Motor neuron (in vitro differentiated cells): ENCODE measurements at regions of chr11 and their contacts with region 1.

Region 1: GRCh38 chr11:57644748-57645688 is 4.7 kb downstream of the YPEL4 start:
- ATAC-seq: peak; percentile 34 to 75 (median 48)
- H3K4me3 ChIP-seq: no peak overlapping the region
- H3K27ac ChIP-seq: no peak overlapping the region
- H3K4me1 ChIP-seq: peaks cover 55 to 66% of the 10 kb centered on the region in 2 donors

Region 2: DNA sequence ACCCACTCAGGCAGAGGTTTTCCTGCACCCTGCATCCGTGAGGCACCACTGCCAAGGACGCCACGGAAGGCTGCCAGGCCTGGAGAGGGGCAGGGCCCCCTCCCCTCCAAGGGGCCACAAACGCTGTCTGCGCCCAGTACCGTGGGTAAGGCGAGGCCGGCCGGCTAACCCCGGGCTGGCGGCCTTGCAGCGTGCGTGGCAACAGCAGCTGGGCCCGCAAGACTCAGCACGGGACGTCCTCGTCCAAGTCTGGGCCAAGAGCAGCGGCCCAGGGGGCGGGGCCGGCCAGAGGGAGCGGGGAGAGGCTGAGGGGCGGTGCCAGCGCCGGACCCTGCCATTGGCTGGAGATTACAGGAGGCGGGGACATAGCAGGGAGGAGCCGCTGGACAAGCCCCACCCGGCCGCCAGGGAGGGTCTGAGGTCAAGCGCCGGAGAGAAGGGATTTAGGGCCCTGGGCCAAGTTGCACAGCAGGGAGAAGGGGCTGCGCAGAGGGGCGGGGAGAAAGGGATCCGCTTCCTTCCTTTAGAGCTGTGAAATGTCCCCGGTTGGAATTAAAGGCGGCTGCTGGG is 145.5 kb before region 1 on chr11:
- in situ Hi-C with region 1: loop called in 1 of 9 experiments (anchors 25 kb)
- ATAC-seq: peak; percentile 98 to 100 (median 99)
- H3K4me3 ChIP-seq: peak overlapping the region; percentile 11 to 32 (median 26)
- H3K27ac ChIP-seq: no peak overlapping the region
- H3K4me1 ChIP-seq: peaks cover 8 to 10% of the 10 kb centered on the region in 2 donors

Region 3: DNA sequence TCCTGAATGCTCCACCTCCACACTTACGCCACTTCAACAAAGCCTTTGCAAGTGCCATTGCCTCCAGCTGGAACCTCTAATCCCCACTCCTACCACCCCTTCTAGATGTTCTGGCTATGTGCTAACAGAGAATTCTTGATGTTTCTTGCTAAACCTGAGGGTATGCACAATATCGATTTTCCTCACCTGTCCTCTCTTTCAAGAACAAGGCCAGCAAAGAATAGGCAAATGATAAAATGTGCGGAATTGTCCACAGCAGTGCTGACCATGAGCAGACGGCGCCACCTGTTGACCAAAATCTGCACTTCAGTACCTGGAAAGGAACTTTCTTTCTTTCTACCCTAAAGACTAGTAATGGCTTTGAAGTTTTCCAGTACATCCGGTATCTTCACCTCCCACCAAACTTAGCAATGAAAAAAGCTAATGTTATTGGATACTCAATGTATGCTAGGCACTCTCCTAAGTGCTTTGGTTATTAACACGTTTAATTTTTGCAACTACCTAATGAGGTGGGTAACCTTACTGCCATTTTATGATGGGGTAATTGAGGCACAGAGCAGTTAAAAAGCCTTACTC is 117.9 kb before region 1 on chr11:
- in situ Hi-C with region 1: no loop called
- ATAC-seq: peak in 2 of 8 experiments; percentile 3 to 5
- H3K4me3 ChIP-seq: no peak overlapping the region
- H3K27ac ChIP-seq: no peak overlapping the region
- H3K4me1 ChIP-seq: peaks cover 6 to 13% of the 10 kb centered on the region in 2 donors

Region 4: DNA sequence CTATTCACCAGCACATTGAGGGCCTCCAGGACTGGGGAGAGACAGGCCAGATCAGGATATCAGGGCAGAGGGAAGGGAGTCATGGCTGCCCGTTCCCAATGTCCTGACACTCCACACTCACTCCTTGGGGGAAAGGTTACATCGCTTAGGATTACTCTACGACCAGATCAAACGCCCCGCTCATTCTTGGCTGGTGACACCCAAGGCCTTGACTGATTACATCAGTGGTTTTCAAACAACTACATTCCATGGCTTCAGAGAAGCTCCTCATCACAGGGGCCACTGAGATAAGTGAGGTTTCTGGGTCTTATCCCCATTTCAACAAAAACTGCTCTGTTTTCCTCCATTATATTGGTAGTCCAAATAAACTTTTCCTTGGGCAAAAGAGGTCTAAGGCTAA is 92.5 kb before region 1 on chr11:
- in situ Hi-C with region 1: no loop called
- ATAC-seq: no peak
- H3K4me3 ChIP-seq: no peak overlapping the region
- H3K27ac ChIP-seq: no peak overlapping the region
- H3K4me1 ChIP-seq: no peaks in the 10 kb centered on the region

Region 5: GRCh38 chr11:57567515-57568329 is 77.3 kb before region 1 on chr11 and contains the start of gene UBE2L6:
- in situ Hi-C with region 1: loop called in 2 of 9 experiments (anchors 5 to 10 kb)
- ATAC-seq: peak; percentile 72 to 89 (median 84)
- H3K4me3 ChIP-seq: peak within 1 kb of the TSS; percentile 82 to 99 (median 90)
- H3K27ac ChIP-seq: peak within 1 kb of the TSS; percentile 90 to 96
- H3K4me1 ChIP-seq: peaks cover 11 to 19% of the 10 kb centered on the region in 2 donors
- total RNA-seq, gene UBE2L6: 22.6 to 177 (median 52.5) TPM

Region 6: GRCh38 chr11:58524232-58525036 is 879.4 kb after region 1 on chr11:
- in situ Hi-C with region 1: no loop called
- ATAC-seq: peak; percentile 61 to 97 (median 86)
- H3K4me3 ChIP-seq: no peak overlapping the region
- H3K27ac ChIP-seq: no peak overlapping the region
- H3K4me1 ChIP-seq: no peaks in the 10 kb centered on the region